ENCODE measurements at regions of chr7 and their contacts with region 1.

Region 1: GRCh38 chr7:148962823-148963582 is 65.3 kb downstream of the PDIA4 start:
- DNase-seq: peak; percentile 67 to 85 (median 80)
- ATAC-seq: peak; percentile 79 to 89
- H3K4me3 ChIP-seq: peak overlapping the region; percentile 97
- H3K27ac ChIP-seq: peak overlapping the region; percentile 49
- H3K4me1 ChIP-seq: no peaks in the 10 kb centered on the region
- H3K27me3 ChIP-seq: no peaks in the 10 kb centered on the region

Region 2: GRCh38 chr7:148262721-148263229 is 700.2 kb before region 1 on chr7:
- intact Hi-C with region 1: loop called in 1 of 4 experiments (anchors 10 kb)
- DNase-seq: peak; percentile 59 to 88 (median 86)
- ATAC-seq: peak; percentile 74 to 85
- H3K4me3 ChIP-seq: no peak overlapping the region
- H3K27ac ChIP-seq: no peak overlapping the region
- H3K4me1 ChIP-seq: no peaks in the 10 kb centered on the region
- H3K27me3 ChIP-seq: no peaks in the 10 kb centered on the region

Region 3: GRCh38 chr7:148503875-148504487 is 459.0 kb before region 1 on chr7:
- intact Hi-C with region 1: loop called in 3 of 4 experiments (anchors 5 kb)
- DNase-seq: no peak
- ATAC-seq: no peak
- H3K4me3 ChIP-seq: no peak overlapping the region
- H3K27ac ChIP-seq: no peak overlapping the region
- H3K4me1 ChIP-seq: no peaks in the 10 kb centered on the region
- H3K27me3 ChIP-seq: no peaks in the 10 kb centered on the region

Region 4: DNA sequence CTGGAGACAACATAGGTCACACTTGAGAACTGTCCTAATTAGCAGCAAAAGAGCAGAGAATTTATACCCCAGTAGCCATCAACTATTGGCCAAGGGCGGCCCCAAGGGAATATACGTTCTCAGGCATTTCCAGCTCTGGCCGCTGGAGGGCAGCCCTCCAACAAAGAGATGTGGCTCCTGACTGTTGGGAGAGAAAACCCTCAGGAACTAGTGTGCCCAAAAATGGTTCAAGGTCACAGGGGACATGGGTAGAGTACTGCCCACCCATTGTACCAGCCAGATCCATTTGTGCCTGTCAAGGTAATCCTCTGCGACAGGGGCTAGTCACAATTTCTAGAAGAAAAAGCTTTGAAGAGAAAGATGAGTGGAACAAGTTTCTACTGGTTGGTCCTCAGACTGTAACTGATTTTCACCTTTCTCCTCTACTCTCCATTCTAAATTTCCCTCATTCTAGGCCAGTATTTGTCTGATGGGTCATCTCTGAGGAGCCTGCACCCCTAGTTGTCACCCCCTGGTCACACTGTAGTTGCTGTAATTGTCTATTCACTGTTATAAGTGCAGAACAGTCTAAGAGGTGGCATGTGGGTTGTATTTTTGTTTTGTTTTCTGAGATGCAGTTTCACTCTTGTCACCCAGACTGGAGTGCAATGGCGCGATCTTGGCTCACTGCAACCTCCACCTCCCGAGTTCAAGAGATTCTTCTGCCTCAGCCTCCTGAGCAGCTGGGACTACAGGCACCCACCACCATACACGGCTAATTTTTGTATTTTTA is 387.2 kb before region 1 on chr7:
- intact Hi-C with region 1: loop called in 3 of 4 experiments (anchors 2 to 5 kb)
- DNase-seq: peak; percentile 61 to 87 (median 86)
- ATAC-seq: peak; percentile 59 to 69
- H3K4me3 ChIP-seq: no peak overlapping the region
- H3K27ac ChIP-seq: no peak overlapping the region
- H3K4me1 ChIP-seq: no peaks in the 10 kb centered on the region
- H3K27me3 ChIP-seq: no peaks in the 10 kb centered on the region

Region 5: DNA sequence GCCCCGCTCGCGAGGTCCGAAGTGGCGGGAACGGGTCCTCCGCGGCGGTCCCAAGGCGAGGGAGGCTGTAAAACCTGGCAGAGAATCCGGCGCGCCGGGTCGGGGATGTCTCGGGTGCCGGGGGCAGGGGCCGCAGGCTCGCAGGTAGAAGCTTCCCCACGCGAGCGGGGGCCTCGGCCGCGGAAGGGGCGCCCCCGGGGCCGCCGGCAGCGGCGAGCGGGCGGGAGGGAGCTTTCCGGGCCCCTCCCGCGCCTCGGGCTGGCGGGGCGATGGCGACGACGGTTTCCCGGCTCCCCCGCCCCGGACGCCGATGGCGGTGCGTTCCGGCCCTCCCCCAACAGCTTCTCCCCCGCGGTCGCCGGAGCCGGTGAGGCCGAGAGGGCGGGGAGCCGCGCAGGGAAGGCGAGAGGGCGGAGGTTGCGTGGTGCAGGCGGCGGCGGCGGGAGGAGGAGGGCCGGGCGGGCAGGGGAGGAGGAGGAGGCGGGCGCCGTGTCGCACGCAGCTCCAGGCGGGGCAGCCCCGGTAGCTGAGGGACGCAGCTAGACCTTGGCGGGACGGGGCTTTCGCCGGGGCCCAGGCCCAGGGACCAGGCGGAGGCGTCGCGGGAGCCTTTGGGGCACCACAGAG is 264.5 kb before region 1 on chr7 and contains the start of gene CUL1:
- intact Hi-C with region 1: loop called in 2 of 4 experiments (anchors 10 kb)
- DNase-seq: peak; percentile 89 to 95 (median 94)
- ATAC-seq: peak; percentile 92 to 95
- H3K4me3 ChIP-seq: peak within 1 kb of the TSS; percentile 62
- H3K27ac ChIP-seq: peak within 1 kb of the TSS; percentile 90
- H3K4me1 ChIP-seq: peaks cover 8% of the 10 kb centered on the region
- H3K27me3 ChIP-seq: no peaks in the 10 kb centered on the region
- total RNA-seq, gene CUL1: 49.3 to 52.8 (median 52.5) TPM

Region 6: DNA sequence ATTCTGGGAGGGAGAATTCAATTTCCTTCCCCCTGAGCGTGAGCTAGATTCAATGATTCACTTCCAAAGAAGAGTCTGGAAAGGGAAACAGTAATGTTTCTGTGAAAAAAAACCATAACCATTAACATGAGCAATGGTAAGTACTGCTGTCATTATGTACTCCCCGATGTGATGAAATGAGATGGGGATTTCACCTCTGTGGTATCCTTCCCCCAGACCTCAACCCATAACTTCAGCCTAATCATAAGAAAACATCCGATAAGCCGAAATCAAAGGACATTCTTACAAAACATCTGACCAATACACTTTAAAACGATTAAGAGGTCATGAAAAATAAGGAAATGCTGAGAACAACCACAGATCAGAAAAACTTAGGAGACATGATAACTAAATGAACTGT is 106.1 kb before region 1 on chr7:
- intact Hi-C with region 1: loop called in 1 of 4 experiments (anchors 10 kb)
- DNase-seq: no peak
- ATAC-seq: no peak
- H3K4me3 ChIP-seq: no peak overlapping the region
- H3K27ac ChIP-seq: no peak overlapping the region
- H3K4me1 ChIP-seq: no peaks in the 10 kb centered on the region
- H3K27me3 ChIP-seq: no peaks in the 10 kb centered on the region

Region 7: GRCh38 chr7:148884299-148885022 is 78.5 kb before region 1 on chr7:
- intact Hi-C with region 1: loop called in 1 of 4 experiments (anchors 10 kb)
- DNase-seq: peak; percentile 93 to 98 (median 97)
- ATAC-seq: peak; percentile 99 to 100
- H3K4me3 ChIP-seq: peak overlapping the region; percentile 97
- H3K27ac ChIP-seq: peak overlapping the region; percentile 98
- H3K4me1 ChIP-seq: no peaks in the 10 kb centered on the region
- H3K27me3 ChIP-seq: no peaks in the 10 kb centered on the region

Measured in right cardiac atrium (tissue), 5 donors.